Adrenal gland (tissue), 19 donors: ENCODE measurements at regions of chr6 and their contacts with region 1.

Region 1: GRCh38 chr6:32744776-32745175 is 3.6 kb downstream of the HLA-DQA2 start:
- DNase-seq: no peak
- H3K4me3 ChIP-seq: no peak overlapping the region
- H3K27ac ChIP-seq: no peak overlapping the region
- H3K4me1 ChIP-seq: no peaks in the 10 kb centered on the region
- H3K27me3 ChIP-seq: peaks cover 4% of the 10 kb centered on the region
- CTCF ChIP-seq: no peak
- POLR2A ChIP-seq: no peak

Region 2: DNA sequence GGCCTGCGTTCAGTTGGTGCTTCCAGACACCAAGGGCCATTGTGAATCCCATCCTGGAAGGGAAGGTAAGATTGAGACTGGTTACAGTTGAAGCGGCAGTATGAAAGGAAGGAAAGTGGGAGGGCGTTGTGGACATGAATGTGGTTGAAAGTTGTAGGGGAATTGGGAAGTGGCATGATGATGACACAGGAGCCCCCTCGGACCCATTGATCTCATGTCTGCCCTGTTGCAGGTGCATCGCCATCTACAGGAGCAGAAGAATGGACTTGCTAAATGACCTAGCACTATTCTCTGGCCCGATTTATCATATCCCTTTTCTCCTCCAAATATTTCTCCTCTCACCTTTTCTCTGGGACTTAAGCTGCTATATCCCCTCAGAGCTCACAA is 102.1 kb before region 1 on chr6:
- intact Hi-C with region 1: loop called in 1 of 2 experiments (anchors 5 kb)
- DNase-seq: no peak
- H3K4me3 ChIP-seq: no peak overlapping the region
- H3K27ac ChIP-seq: no peak overlapping the region
- H3K4me1 ChIP-seq: no peaks in the 10 kb centered on the region
- H3K27me3 ChIP-seq: no peaks in the 10 kb centered on the region
- CTCF ChIP-seq: no peak
- POLR2A ChIP-seq: no peak

Region 3: GRCh38 chr6:32785781-32786533 is 41.2 kb after region 1 on chr6:
- intact Hi-C with region 1: no loop called
- DNase-seq: peak; percentile 41 to 60 (median 49)
- H3K4me3 ChIP-seq: no peak overlapping the region
- H3K27ac ChIP-seq: no peak overlapping the region
- H3K4me1 ChIP-seq: no peaks in the 10 kb centered on the region
- H3K27me3 ChIP-seq: peaks cover 13% of the 10 kb centered on the region
- CTCF ChIP-seq: peak; percentile 50 to 64 (median 60)
- POLR2A ChIP-seq: no peak